SK-N-SH (cell line): ENCODE measurements at regions of chr20 and their contacts with region 1.

Region 1: DNA sequence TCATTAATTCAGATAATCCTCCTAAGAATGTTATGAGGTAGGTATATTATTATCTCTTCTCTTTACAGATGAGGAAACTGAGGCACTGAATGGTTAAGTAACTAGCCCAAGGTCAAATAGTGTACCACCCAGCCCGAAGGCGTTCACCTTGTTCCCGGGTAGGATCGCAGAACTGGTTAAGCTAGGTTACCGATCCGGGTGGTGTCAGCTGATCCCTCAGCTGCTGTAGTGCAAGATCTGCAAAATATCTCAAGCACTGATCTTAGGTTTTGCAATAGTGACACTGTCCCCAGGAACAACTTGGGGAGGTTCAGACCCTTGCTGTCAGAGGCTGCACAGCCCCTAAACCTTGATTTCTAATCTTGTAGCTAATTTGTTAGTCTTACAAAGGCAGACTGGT is 28.2 kb downstream of the SLC52A3 start:
- DNase-seq: no peak
- H3K4me3 ChIP-seq: no peak overlapping the region
- H3K27ac ChIP-seq: no peak overlapping the region
- H3K4me1 ChIP-seq: no peaks in the 10 kb centered on the region; a peak in 1 of 4 replicates
- H3K27me3 ChIP-seq: no peaks in the 10 kb centered on the region; the same call in 1 of the 2 replicates
- CTCF ChIP-seq: no peak
- EP300 ChIP-seq: no peak
- RAD21 ChIP-seq: no peak

Region 2: DNA sequence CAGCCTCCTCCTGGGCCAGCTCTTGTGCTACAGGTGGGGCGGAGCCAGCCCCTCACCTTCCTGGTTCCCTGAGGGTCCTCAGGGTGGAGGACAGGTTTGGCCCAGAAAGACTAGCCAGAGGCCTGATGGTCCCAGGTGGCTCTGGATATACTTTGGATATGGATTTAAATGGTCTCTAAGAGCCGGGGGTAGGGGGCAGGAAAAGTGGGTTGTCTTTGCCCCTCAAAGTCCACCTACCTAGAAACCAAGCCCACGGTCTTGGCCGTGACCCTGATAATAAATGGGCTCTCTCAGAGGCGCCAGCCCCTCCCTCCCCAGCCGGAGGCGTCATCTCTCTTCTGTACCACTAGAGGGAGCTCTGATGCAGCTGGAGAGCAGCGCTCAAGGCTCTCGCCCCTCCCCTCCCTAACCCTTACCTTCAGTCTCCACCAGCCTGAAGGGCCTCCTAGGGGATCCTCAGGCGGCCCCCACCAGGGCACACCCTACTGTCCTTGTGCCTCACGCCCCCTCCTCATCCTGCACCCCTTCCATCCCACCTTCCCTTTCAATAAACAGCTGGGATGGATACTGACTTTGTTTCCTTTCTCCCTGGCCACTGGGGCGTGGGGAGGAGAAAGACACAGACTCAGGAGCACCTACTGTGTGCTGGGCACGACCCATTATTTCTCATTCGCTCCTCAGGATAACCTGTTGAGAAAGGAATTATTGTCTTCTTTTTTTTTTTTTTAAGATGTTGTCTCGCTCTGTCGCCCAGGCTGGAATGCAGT is 385.7 kb before region 1 on chr20:
- CTCF ChIA-PET with region 1: interaction called, 10 read pairs
- POLR2A ChIA-PET with region 1: no interaction called
- DNase-seq: peak; percentile 90
- H3K4me3 ChIP-seq: peak overlapping the region in 1 of 2 experiments; percentile 54; a peak in 1 of 4 replicates
- H3K27ac ChIP-seq: no peak overlapping the region; a peak in 1 of 4 replicates
- H3K4me1 ChIP-seq: no peaks in the 10 kb centered on the region; a peak in 1 of 4 replicates
- H3K27me3 ChIP-seq: no peaks in the 10 kb centered on the region
- CTCF ChIP-seq: peak; percentile 91
- EP300 ChIP-seq: no peak
- RAD21 ChIP-seq: peak; percentile 96

Region 3: DNA sequence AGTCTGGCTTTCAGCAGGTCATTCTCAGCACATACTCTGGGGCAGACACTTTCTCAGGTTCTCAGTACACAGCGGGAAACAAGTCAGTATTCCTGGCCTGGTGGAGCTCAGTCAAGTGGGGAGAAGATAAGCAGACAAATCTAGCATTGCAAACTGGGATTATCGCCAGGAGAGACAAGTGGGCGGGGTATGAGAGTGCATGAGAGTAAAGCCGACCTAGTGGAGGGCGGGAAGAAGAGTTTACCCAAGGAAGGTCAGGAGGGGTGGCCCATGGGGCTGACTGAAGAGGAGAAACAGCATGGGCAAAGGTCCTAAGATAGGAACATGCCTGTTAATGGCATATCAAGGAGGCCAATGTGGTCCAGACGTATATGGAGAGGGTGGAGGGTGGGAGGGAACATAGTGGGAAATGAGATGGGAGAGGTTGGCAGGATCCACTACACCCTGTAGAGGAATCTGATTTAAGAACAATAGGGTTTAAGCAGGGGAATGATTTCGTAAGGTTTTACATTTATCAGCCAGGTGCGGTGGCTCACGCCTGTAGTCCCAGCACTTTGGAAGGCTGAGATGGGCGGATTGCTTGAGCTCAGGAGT is 184.1 kb before region 1 on chr20:
- CTCF ChIA-PET with region 1: interaction called, 83 read pairs
- POLR2A ChIA-PET with region 1: no interaction called
- DNase-seq: peak; percentile 36
- H3K4me3 ChIP-seq: no peak overlapping the region
- H3K27ac ChIP-seq: no peak overlapping the region
- H3K4me1 ChIP-seq: peaks cover 0 to 7% of the 10 kb centered on the region in 2 experiments; a peak in 1 of 4 replicates
- H3K27me3 ChIP-seq: peaks cover 13% of the 10 kb centered on the region
- CTCF ChIP-seq: no peak
- EP300 ChIP-seq: no peak
- RAD21 ChIP-seq: no peak

Region 4: DNA sequence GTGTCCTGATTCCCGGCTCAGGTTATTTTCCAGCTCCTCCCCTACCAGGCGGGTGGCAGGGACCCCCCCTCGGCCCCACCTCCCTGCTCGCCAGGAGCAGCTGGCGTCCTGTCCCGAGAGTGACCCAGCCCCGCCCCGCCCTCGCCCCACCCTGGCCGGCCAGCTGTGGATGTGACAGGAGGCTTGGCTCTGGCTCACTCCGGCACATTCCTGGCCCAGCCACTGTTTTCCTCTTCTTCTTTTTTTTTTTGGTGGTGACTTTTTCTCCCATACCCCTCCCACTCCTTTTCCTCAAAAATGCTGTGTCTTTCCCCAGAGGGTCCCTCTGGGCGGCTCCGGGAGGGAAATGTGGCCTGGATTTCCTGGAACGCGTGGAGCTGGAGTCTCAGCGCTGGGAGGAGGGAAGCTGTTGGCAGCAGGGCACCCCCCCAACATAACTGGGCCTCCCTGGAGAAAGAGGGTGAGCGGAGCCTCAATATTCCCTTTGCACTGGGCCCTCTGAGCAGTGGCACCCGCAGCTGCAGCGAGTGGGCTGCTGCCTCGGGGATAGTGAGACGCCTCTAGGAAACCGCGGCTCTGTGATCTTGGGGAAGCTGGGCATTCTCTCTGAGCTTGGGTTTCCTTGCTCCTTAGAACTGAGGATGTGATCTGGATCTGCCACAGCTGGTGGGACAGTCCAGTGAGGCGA is 168.2 kb before region 1 on chr20:
- CTCF ChIA-PET with region 1: interaction called, 15 read pairs
- POLR2A ChIA-PET with region 1: no interaction called
- DNase-seq: peak; percentile 53
- H3K4me3 ChIP-seq: no peak overlapping the region
- H3K27ac ChIP-seq: no peak overlapping the region
- H3K4me1 ChIP-seq: peaks cover 0 to 3% of the 10 kb centered on the region in 2 experiments; a peak in 1 of 4 replicates
- H3K27me3 ChIP-seq: peaks cover 26% of the 10 kb centered on the region; the same call in 1 of the 2 replicates
- CTCF ChIP-seq: no peak
- EP300 ChIP-seq: no peak
- RAD21 ChIP-seq: no peak

Region 5: DNA sequence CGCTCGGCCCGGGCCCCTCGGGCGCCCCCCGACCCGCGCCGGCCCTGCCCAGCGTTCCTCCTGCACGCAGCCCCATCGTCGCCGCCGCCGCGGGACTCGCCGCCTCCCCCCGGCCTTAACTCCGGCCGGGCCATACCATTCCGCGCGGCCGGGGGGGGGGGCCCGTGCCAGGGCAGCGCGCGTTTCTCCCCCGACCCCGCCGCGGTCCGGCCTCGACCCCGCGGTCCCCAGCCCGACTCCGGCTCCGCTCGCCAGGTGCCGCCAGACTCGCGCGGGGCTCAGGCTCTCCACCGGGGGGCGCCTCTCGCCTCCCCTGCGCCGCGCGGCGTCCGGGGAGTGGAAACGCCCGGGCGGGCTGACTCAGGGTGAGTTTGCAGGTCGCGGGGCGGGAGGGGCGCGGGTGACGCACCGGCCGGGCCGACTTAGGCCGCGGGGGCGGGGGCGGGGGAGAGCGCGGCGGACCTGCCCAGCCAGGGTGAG is 87.0 kb before region 1 on chr20 and contains the start of gene SRXN1:
- CTCF ChIA-PET with region 1: interaction called, 13 read pairs
- POLR2A ChIA-PET with region 1: interaction called, 3 read pairs
- DNase-seq: peak; percentile 97
- H3K4me3 ChIP-seq: peak within 1 kb of the TSS; percentile 71 to 89
- H3K27ac ChIP-seq: peak within 1 kb of the TSS; percentile 53 to 68; a peak in 3 of 4 replicates
- H3K4me1 ChIP-seq: peaks cover 0 to 17% of the 10 kb centered on the region in 2 experiments; a peak in 2 of 4 replicates
- H3K27me3 ChIP-seq: no peaks in the 10 kb centered on the region
- CTCF ChIP-seq: peak; percentile 53
- EP300 ChIP-seq: no peak
- RAD21 ChIP-seq: peak; percentile 60
- polyA plus RNA-seq, gene SRXN1: 26.2 and 36.0 TPM in 2 replicates

Region 6: GRCh38 chr20:728248-728944 is 11.7 kb before region 1 on chr20:
- CTCF ChIA-PET with region 1: interaction called, 30 read pairs
- POLR2A ChIA-PET with region 1: no interaction called
- DNase-seq: peak; percentile 95
- H3K4me3 ChIP-seq: peak overlapping the region; percentile 52 to 60
- H3K27ac ChIP-seq: no peak overlapping the region; a peak in 1 of 4 replicates
- H3K4me1 ChIP-seq: no peaks in the 10 kb centered on the region; a peak in 1 of 4 replicates
- H3K27me3 ChIP-seq: peaks cover 14% of the 10 kb centered on the region; the same call in 1 of the 2 replicates
- CTCF ChIP-seq: peak; percentile 62
- EP300 ChIP-seq: no peak
- RAD21 ChIP-seq: peak; percentile 89